ENCODE measurements at regions of chr6 and their contacts with region 1.

Region 1: GRCh38 chr6:112043032-112044007 is 10.6 kb upstream of the CCN6 start:
- DNase-seq: peak; percentile 77 to 80
- H3K4me3 ChIP-seq: peak overlapping the region; percentile 64
- H3K27ac ChIP-seq: peak overlapping the region; percentile 42
- H3K4me1 ChIP-seq: 0 out of 2 replicates have a peak, but pooled peaks cover 4% of the 10 kb centered on the region
- H3K27me3 ChIP-seq: no peaks in the 10 kb centered on the region
- CTCF ChIP-seq: peak; percentile 96

Region 2: GRCh38 chr6:110735666-110736065 is 1307.7 kb before region 1 on chr6:
- CTCF ChIA-PET with region 1: interaction called, 12 read pairs
- POLR2A ChIA-PET with region 1: no interaction called
- intact Hi-C with region 1: no loop called
- DNase-seq: no peak
- H3K4me3 ChIP-seq: no peak overlapping the region
- H3K27ac ChIP-seq: no peak overlapping the region
- H3K4me1 ChIP-seq: no peaks in the 10 kb centered on the region
- H3K27me3 ChIP-seq: no peaks in the 10 kb centered on the region
- CTCF ChIP-seq: no peak

Region 3: GRCh38 chr6:111057074-111057752 is 986.1 kb before region 1 on chr6:
- CTCF ChIA-PET with region 1: no interaction called
- POLR2A ChIA-PET with region 1: no interaction called
- intact Hi-C with region 1: loop called (anchors 2 kb)
- DNase-seq: no peak
- H3K4me3 ChIP-seq: no peak overlapping the region
- H3K27ac ChIP-seq: no peak overlapping the region
- H3K4me1 ChIP-seq: no peaks in the 10 kb centered on the region
- H3K27me3 ChIP-seq: no peaks in the 10 kb centered on the region
- CTCF ChIP-seq: peak; percentile 86

Region 4: DNA sequence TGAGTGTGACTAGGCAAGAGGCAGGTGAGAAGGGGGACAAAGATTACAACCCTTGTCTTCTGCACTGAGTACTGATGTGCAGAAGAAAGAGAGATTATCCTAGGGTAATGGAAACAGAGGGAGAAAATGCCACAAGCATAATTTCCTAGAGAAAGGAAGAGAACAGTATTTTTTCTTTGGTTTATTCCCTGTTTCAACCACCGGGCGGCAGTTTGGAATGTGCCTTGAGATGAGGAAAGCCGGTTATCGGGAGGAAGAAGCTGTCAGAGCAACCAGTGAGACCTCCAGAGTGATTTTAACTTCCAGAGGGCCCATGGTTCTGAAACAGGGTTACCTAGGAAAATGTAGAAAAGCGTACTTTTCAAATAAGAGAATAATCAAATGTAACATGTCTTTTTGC is 681.7 kb before region 1 on chr6:
- CTCF ChIA-PET with region 1: no interaction called
- POLR2A ChIA-PET with region 1: no interaction called
- intact Hi-C with region 1: loop called (anchors 1 kb)
- DNase-seq: peak in 1 of 2 experiments; percentile 12
- H3K4me3 ChIP-seq: no peak overlapping the region
- H3K27ac ChIP-seq: no peak overlapping the region
- H3K4me1 ChIP-seq: no peaks in the 10 kb centered on the region
- H3K27me3 ChIP-seq: no peaks in the 10 kb centered on the region
- CTCF ChIP-seq: peak; percentile 72

Region 5: GRCh38 chr6:111573892-111574797 is 469.2 kb before region 1 on chr6:
- CTCF ChIA-PET with region 1: interaction called, 15 read pairs
- POLR2A ChIA-PET with region 1: no interaction called
- intact Hi-C with region 1: no loop called
- DNase-seq: no peak
- H3K4me3 ChIP-seq: no peak overlapping the region
- H3K27ac ChIP-seq: no peak overlapping the region
- H3K4me1 ChIP-seq: no peaks in the 10 kb centered on the region
- H3K27me3 ChIP-seq: no peaks in the 10 kb centered on the region
- CTCF ChIP-seq: no peak

Region 6: GRCh38 chr6:111709615-111710398 is 333.5 kb before region 1 on chr6:
- CTCF ChIA-PET with region 1: interaction called, 7 read pairs
- POLR2A ChIA-PET with region 1: no interaction called
- intact Hi-C with region 1: loop called (anchors 1 kb)
- DNase-seq: peak; percentile 54 to 56
- H3K4me3 ChIP-seq: no peak overlapping the region
- H3K27ac ChIP-seq: no peak overlapping the region
- H3K4me1 ChIP-seq: 0 out of 2 replicates have a peak, but pooled peaks cover 5% of the 10 kb centered on the region
- H3K27me3 ChIP-seq: no peaks in the 10 kb centered on the region
- CTCF ChIP-seq: peak; percentile 91

Region 7: GRCh38 chr6:111997078-111997852 is 46.1 kb before region 1 on chr6:
- CTCF ChIA-PET with region 1: interaction called, 10 read pairs
- POLR2A ChIA-PET with region 1: interaction called, 3 read pairs
- intact Hi-C with region 1: loop called (anchors 1 kb)
- DNase-seq: peak; percentile 79 to 82
- H3K4me3 ChIP-seq: no peak overlapping the region
- H3K27ac ChIP-seq: no peak overlapping the region
- H3K4me1 ChIP-seq: peaks cover 22% of the 10 kb centered on the region
- H3K27me3 ChIP-seq: no peaks in the 10 kb centered on the region
- CTCF ChIP-seq: peak; percentile 99

Measured in PC-9 (cell line).